ENCODE measurements at regions of chr12 and their contacts with region 1.

Region 1: GRCh38 chr12:30754709-30755394 is at the start of gene CAPRIN2:
- DNase-seq: peak; percentile 98
- H3K4me3 ChIP-seq: peak within 1 kb of the TSS; percentile 65 to 90 (median 77)
- H3K27ac ChIP-seq: peak within 1 kb of the TSS; percentile 86 to 92 (median 90)
- H3K4me1 ChIP-seq: peaks cover 6 to 16% (median 11%) of the 10 kb centered on the region in 4 donors
- H3K27me3 ChIP-seq: no peaks in the 10 kb centered on the region
- CTCF ChIP-seq: peak in 4 of 5 experiments; percentile 4 to 43 (median 30)
- EP300 ChIP-seq: no peak
- POLR2A ChIP-seq: peak; percentile 74
- total RNA-seq, gene CAPRIN2: 24.7 to 322 (median 42.5) TPM

Region 2: DNA sequence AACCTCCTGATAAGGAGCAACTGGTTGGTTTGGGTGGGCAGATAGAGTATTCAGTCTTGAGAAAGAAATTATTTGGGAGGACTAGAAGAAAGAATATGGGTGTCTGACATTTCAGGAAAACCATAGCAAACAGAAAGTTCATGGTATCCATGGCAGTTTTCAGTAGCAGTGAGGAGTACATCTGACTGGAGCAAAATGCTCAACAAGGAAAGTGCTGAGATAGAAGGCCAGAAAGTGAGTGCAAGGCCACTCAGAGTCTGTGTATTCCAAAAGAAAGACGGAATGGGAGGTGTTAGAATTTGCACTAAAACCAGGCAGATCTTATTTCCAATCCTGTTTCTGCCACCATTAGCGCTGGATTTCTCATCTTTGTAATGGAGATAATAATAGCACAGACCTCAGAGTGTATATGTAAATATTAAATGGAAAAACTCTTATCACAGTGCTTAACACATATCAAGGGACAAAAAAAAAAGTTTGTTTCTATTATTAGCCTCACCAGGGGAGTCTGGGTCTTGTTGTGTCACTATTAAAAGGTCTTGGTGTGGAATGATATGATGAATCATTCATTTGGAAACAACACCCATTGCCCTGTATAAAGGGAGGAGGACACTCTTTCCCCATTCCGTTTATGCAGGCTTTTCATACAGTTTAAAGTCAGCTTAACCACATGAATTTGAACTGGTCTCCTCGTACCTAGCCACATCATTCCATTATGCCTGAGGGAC is 408.9 kb before region 1 on chr12:
- in situ Hi-C with region 1: no loop called
- intact Hi-C with region 1: no loop called
- DNase-seq: no peak
- H3K4me3 ChIP-seq: no peak overlapping the region
- H3K27ac ChIP-seq: no peak overlapping the region
- H3K4me1 ChIP-seq: no peaks in the 10 kb centered on the region
- H3K27me3 ChIP-seq: no peaks in the 10 kb centered on the region
- CTCF ChIP-seq: no peak
- EP300 ChIP-seq: no peak
- POLR2A ChIP-seq: no peak

Region 3: DNA sequence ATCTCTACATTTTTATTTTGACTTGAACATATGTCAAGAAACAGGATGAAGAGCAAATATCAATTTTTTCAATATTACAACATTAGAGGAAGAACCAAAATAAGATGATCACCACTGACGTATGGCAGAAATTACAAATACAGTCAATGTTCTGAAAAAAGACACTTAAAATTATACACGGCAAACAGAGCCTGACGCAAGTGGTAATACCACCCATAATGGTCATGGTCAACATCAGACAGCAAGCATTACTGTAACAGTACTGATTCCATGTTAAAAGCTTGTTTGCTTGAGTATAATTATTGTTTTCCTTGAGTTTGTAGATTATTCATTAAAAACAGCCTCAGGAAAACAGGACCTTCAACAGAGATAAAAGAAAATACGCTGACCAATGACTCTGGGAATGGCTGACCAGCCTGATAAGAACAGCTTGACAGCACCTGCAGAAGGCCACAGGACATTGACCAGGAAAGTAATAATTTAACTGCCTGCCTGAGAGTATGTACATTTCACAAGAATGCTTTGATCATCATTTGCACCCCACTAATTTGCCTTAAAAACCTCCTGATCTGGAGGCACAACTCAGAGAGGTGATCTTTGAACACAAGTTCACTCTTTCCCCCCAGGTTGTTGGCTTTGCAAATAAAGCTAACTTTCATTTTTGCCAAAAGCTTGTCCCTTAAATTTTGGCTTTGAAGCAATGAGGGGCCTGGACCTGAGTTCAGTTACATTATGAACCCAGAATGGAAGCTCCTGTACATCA is 246.5 kb before region 1 on chr12:
- in situ Hi-C with region 1: no loop called
- intact Hi-C with region 1: no loop called
- DNase-seq: no peak
- H3K4me3 ChIP-seq: no peak overlapping the region
- H3K27ac ChIP-seq: no peak overlapping the region
- H3K4me1 ChIP-seq: no peaks in the 10 kb centered on the region
- H3K27me3 ChIP-seq: no peaks in the 10 kb centered on the region
- CTCF ChIP-seq: no peak
- EP300 ChIP-seq: no peak
- POLR2A ChIP-seq: no peak

Region 4: DNA sequence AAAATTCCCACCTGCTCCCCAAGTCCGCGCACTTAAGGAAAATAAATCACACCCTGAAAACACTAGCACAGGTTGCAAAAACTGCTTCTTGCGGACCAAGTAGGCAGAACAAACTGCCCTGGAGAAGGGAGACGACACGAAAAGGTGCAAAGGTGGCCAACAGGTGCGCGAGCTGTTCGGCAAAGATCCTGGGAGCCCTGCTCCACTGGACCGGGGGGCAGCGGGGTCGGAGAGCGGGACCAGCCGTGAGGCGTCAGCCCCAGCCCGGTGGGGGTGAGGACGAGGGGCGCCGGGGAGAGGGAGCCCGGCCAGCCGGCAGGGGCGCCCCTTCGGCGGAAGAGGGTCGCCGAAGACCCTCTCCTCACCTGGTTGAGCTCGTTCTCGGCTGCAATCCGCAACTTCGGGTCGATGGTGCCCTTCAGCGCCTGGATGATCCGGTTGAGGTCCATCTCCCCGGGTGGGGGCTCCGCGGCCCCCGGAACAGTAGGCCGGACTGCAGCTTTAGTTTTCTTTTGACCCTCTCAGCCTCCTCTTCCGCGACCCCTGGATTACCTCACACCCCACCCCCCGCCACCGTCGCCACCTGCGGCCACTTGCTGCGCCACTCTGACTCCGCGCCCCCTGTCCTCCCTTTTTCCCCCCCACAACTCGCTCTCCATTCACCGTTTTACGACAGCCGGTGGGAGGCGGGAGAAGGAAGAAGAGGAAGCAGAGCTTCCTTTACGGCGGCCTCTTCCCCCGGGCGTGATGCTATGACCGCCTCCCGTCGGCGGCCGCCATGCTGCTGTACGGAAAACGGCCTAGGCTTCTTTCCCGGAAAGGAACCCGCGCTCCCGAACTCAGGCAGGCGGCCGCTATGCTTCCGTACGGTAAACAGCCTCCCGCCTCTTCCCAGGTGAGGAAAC is 59.4 kb before region 1 on chr12 and contains the start of gene IPO8:
- in situ Hi-C with region 1: no loop called
- intact Hi-C with region 1: loop called (anchors 10 kb)
- DNase-seq: peak; percentile 95
- H3K4me3 ChIP-seq: peak within 1 kb of the TSS; percentile 93 to 99 (median 96)
- H3K27ac ChIP-seq: peak within 1 kb of the TSS; percentile 87 to 94 (median 90)
- H3K4me1 ChIP-seq: peaks cover 13 to 36% (median 14%) of the 10 kb centered on the region in 4 donors
- H3K27me3 ChIP-seq: no peaks in the 10 kb centered on the region
- CTCF ChIP-seq: peak; percentile 4 to 58 (median 48)
- EP300 ChIP-seq: no peak
- POLR2A ChIP-seq: peak; percentile 17
- total RNA-seq, gene IPO8: 35.2 to 73.9 (median 62.6) TPM

Region 5: DNA sequence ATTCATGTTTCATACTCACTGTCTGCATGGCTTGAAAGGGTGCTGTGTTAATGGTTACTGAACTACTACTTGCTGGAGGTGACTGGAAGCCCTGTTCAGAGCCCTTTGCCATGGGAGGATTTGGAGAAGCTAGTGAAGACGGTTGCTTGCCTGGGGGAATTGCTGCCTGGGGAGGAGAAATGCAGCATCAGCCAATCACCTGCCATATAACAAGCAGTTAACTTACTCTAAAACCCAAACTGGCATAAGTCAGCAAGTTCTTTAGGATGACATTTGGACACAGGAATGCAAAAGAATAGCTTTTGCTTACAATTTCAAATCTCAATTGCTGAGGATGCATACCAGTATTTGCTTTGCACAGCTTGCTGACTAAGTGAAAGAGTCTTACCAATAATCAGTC is 35.8 kb before region 1 on chr12:
- in situ Hi-C with region 1: no loop called
- intact Hi-C with region 1: no loop called
- DNase-seq: no peak
- H3K4me3 ChIP-seq: no peak overlapping the region
- H3K27ac ChIP-seq: no peak overlapping the region
- H3K4me1 ChIP-seq: no peaks in the 10 kb centered on the region
- H3K27me3 ChIP-seq: no peaks in the 10 kb centered on the region
- CTCF ChIP-seq: no peak
- EP300 ChIP-seq: no peak
- POLR2A ChIP-seq: no peak

Measured in transverse colon (tissue), 4 donors.